Calu3 (cell line): ENCODE measurements at regions of chr1 and their contacts with region 1.

Region 1: DNA sequence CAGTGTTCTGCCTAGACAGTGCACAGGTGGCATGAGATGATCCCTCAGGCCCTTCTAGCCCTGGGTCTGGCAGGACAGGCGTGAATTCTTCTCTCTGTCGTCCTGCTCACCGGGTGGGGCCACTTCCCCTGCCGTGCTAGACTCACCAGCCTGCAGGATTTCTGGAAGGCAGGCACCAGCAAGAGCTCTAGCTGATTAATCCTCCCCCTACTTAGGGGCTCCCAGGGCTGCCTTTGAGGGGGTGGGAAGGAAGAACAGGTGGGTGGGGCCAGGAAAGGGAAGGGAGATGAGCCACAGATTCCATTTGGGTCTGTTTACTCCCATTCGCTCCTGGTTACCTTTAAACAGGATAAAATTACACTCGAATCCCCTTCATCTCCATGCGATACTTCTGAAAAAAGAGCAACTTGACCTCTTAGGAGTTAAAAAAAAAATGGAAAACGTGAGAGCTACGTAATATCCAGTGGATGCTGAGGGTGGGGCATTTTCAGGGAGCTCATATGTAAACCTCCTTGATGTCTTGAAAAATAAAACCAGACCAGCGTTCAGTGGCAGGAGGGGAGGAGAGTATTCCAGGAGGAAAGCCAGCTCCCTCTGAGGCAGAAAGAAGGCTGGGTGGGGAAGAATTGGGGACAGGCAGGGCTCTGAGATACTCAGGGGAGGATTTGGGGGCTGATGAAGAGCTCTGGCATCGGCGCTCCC is 665.5 kb downstream of the PTPRU start:
- DNase-seq: no peak
- H3K4me3 Mint-ChIP-seq: no peak overlapping the region
- H3K27ac Mint-ChIP-seq: no peak overlapping the region
- H3K4me1 Mint-ChIP-seq: peaks cover 8% of the 10 kb centered on the region
- H3K27me3 Mint-ChIP-seq: peaks cover 90% of the 10 kb centered on the region
- CTCF ChIP-seq: no peak

Region 2: GRCh38 chr1:29793101-29793546 is 108.7 kb before region 1 on chr1:
- CTCF ChIA-PET with region 1: no interaction called
- intact Hi-C with region 1: loop called (anchors 10 kb)
- DNase-seq: peak; percentile 89
- H3K4me3 Mint-ChIP-seq: no peak overlapping the region
- H3K27ac Mint-ChIP-seq: peak overlapping the region; percentile 56
- H3K4me1 Mint-ChIP-seq: peaks cover 9% of the 10 kb centered on the region
- H3K27me3 Mint-ChIP-seq: peaks cover 56% of the 10 kb centered on the region
- CTCF ChIP-seq: peak; percentile 85